Calu3 (cell line): ENCODE measurements at regions of chr2 and their contacts with region 1.

Region 1: DNA sequence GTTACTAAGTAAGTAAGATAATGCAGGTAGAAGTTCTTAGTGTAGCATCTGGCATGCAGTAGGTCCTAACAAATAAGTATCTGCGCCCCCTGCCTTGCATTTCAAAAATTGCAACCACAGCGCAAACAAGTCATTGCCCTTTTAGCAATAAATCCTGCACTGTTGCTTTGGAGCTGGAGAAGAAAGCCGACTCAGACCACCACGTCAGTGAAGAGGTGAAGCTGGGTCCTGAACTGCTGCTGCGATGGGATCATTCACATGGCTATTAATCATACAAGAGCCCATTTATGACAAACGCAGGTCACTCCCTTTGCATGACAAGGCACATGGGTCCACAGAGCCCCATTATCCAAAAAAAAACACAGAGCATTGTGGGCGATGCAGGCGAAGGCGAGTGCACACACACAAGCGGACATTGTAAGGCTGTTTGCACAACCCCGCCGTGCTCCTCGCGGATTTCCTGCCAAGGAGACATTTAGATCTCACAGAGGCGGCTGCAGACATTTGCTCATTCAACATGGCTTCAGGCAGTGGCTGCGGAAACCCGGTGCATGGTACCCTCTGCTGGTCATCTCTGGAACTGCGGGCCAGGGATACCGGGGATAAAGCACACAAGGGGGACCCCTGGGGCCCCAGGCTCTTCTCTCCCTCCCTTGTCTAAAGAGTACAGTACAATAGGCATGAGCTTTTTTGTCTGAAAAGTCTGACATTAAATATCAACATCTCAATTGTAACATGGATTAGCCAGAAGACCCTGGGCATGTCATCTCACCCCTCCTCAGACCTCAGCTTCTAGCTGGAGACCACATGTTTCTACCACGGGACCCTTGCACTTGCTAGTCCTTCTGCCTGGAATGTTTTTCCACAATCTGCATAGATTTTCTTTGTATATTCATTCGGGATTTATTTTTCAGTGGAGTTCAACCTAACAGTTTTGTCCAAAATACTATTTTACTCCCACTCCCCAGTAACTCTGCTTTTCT is 56.7 kb downstream of the CYRIA start:
- DNase-seq: peak; percentile 90
- H3K4me3 Mint-ChIP-seq: peak overlapping the region; percentile 58
- H3K27ac Mint-ChIP-seq: no peak overlapping the region
- H3K4me1 Mint-ChIP-seq: peaks cover 2% of the 10 kb centered on the region
- H3K27me3 Mint-ChIP-seq: peaks cover 44% of the 10 kb centered on the region
- CTCF ChIP-seq: peak; percentile 94

Region 2: GRCh38 chr2:16525265-16525887 is 83.6 kb before region 1 on chr2:
- CTCF ChIA-PET with region 1: no interaction called
- intact Hi-C with region 1: loop called (anchors 1 kb)
- DNase-seq: peak; percentile 30
- H3K4me3 Mint-ChIP-seq: no peak overlapping the region
- H3K27ac Mint-ChIP-seq: no peak overlapping the region
- H3K4me1 Mint-ChIP-seq: no peaks in the 10 kb centered on the region
- H3K27me3 Mint-ChIP-seq: peaks cover 65% of the 10 kb centered on the region
- CTCF ChIP-seq: peak; percentile 34

Region 3: GRCh38 chr2:16553226-16553625 is 55.7 kb before region 1 on chr2:
- CTCF ChIA-PET with region 1: interaction called, 6 read pairs
- intact Hi-C with region 1: loop called (anchors 1 kb)
- DNase-seq: peak; percentile 49
- H3K4me3 Mint-ChIP-seq: no peak overlapping the region
- H3K27ac Mint-ChIP-seq: no peak overlapping the region
- H3K4me1 Mint-ChIP-seq: no peaks in the 10 kb centered on the region
- H3K27me3 Mint-ChIP-seq: peaks cover 67% of the 10 kb centered on the region
- CTCF ChIP-seq: peak; percentile 52

Region 4: GRCh38 chr2:16756831-16757644 is 148.1 kb after region 1 on chr2:
- CTCF ChIA-PET with region 1: interaction called, 35 read pairs
- intact Hi-C with region 1: loop called (anchors 1 kb)
- DNase-seq: peak; percentile 70
- H3K4me3 Mint-ChIP-seq: no peak overlapping the region
- H3K27ac Mint-ChIP-seq: no peak overlapping the region
- H3K4me1 Mint-ChIP-seq: no peaks in the 10 kb centered on the region
- H3K27me3 Mint-ChIP-seq: peaks cover 86% of the 10 kb centered on the region
- CTCF ChIP-seq: peak; percentile 90